ENCODE measurements at regions of chr1 and their contacts with region 1.

Region 1: GRCh38 chr1:220038640-220039039 is 7.7 kb downstream of the EPRS1 start:
- DNase-seq: no peak
- H3K4me3 ChIP-seq: no peak overlapping the region
- H3K27ac ChIP-seq: no peak overlapping the region
- H3K4me1 ChIP-seq: no peaks in the 10 kb centered on the region
- H3K27me3 ChIP-seq: no peaks in the 10 kb centered on the region
- CTCF ChIP-seq: no peak
- POLR2A ChIP-seq: no peak

Region 2: GRCh38 chr1:220076861-220077762 is 38.5 kb after region 1 on chr1:
- intact Hi-C with region 1: loop called (anchors 5 kb)
- DNase-seq: no peak
- H3K4me3 ChIP-seq: no peak overlapping the region
- H3K27ac ChIP-seq: no peak overlapping the region
- H3K4me1 ChIP-seq: no peaks in the 10 kb centered on the region
- H3K27me3 ChIP-seq: no peaks in the 10 kb centered on the region
- CTCF ChIP-seq: no peak
- POLR2A ChIP-seq: no peak

Measured in breast epithelium (tissue), 4 donors.